Activated CD4-positive, alpha-beta memory T cell treated with anti-CD3 and anti-CD28 coated beads for 36 hours (primary cell): ENCODE measurements at regions of chr2 and their contacts with region 1.

Region 1: GRCh38 chr2:30089171-30089570 is 57.6 kb upstream of the YPEL5 start:
- DNase-seq: no peak
- H3K4me3 Mint-ChIP-seq: no peak overlapping the region
- H3K27ac Mint-ChIP-seq: no peak overlapping the region
- H3K4me1 Mint-ChIP-seq: peaks cover 1% of the 10 kb centered on the region
- H3K27me3 Mint-ChIP-seq: peaks cover 20% of the 10 kb centered on the region

Region 2: DNA sequence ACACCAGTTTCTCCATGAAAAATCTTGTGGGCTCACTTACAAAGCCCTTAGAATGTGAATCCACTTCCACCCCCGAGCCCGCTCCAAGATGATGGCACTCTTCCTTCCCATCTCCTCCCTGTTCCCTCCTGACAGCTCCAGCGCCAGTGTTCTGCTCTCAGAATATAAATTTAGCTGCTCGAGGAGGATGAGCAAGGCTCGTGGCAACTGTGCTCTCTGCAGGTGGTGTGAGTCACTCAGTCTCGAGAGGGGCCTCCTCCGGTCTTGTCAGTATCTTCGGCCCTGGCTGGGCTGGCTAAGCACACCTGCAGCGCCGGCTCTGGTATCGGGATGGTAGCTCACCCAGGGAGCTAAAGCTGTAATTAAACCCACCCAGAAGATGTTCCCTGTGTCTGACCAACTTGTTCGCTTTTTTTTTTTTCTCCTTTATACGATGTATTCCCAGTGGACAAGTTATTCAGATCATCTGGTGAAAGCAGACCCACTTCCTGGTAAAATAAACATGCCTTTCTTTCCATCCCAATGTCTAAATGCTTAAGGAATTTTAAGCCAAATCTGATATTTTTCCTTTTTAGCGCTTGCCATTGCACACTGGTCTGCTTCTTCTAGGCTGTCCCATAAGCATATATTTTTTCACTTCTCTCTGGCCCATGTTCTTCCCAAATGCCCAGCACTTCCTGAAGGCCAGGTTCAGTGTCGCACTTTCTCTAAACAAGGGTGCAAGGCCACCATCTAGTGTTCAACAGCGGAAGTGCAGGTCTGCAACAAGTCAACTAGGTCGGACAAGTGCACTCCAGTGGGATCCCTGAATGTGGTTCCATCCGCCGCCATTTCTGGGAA is 26.2 kb after region 1 on chr2:
- CTCF ChIA-PET with region 1: interaction called, 57 read pairs
- POLR2A ChIA-PET with region 1: no interaction called
- intact Hi-C with region 1: loop called (anchors 1 kb)
- DNase-seq: peak; percentile 78
- H3K4me3 Mint-ChIP-seq: no peak overlapping the region
- H3K27ac Mint-ChIP-seq: no peak overlapping the region
- H3K4me1 Mint-ChIP-seq: peaks cover 4% of the 10 kb centered on the region
- H3K27me3 Mint-ChIP-seq: peaks cover 2% of the 10 kb centered on the region